ENCODE measurements at regions of chr2 and their contacts with region 1.

Region 1: DNA sequence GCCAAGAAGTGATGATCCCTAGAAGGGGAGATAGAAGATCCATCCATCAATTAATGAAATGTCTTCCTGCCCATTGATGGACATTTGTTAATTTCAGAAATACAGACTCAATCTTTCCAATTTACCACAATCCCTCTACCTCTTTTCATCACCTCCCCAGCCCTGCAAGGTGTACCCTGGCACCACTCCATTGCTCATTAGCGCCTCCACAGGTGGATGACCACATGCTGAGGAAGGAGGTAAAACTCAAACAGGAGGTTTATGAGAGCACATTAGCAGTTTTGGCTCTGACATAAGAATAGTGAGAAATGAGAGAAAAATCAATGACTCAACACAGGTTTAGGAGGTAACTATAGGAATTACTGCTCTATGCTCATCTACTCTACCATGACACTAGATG is 208.0 kb downstream of the C1D start:
- DNase-seq: no peak
- ATAC-seq: no peak
- H3K4me3 ChIP-seq: no peak overlapping the region
- H3K27ac ChIP-seq: no peak overlapping the region
- H3K4me1 ChIP-seq: no peaks in the 10 kb centered on the region
- H3K27me3 ChIP-seq: peaks cover 2% of the 10 kb centered on the region

Region 2: DNA sequence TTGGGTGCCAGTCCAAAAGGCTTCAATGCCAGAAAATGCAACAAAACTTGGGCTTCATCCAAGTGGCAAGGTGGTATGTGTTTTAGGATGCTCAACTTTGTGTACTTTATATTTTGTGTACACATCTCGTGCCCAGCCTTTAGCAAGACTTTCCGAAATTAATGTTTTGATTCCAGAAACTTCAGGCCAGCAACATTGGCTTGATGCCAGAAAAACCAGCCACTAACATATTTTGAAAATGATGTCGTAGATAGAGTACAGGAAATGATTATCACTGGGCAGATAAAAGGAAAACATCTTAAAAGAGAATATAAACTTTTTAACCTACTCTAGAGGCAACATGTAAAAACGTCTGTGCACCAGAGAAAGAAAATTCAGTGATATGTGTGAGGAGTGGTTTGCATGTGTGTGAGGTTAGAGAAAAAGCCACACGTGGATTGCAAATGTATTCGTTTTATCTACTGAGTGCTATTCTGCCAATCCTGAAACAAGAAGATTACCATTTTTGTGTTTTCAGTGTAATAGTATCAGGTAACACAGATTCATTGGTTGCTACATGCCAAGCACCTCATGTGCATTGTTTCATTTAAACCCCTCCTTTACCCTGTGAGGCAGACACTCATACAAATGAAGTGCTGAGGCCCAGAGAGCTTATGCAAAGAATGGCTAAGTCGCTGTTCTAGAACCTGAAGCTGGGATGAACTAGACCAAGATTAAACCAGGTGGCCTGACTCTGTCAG is 56.8 kb before region 1 on chr2:
- intact Hi-C with region 1: no loop called
- DNase-seq: no peak
- ATAC-seq: no peak
- H3K4me3 ChIP-seq: no peak overlapping the region
- H3K27ac ChIP-seq: no peak overlapping the region
- H3K4me1 ChIP-seq: no peaks in the 10 kb centered on the region
- H3K27me3 ChIP-seq: no peaks in the 10 kb centered on the region

Region 3: GRCh38 chr2:68031542-68032160 is 176.9 kb after region 1 on chr2:
- intact Hi-C with region 1: loop called in 1 of 4 experiments (anchors 10 kb)
- DNase-seq: no peak
- ATAC-seq: no peak
- H3K4me3 ChIP-seq: no peak overlapping the region
- H3K27ac ChIP-seq: no peak overlapping the region
- H3K4me1 ChIP-seq: no peaks in the 10 kb centered on the region
- H3K27me3 ChIP-seq: no peaks in the 10 kb centered on the region

Region 4: DNA sequence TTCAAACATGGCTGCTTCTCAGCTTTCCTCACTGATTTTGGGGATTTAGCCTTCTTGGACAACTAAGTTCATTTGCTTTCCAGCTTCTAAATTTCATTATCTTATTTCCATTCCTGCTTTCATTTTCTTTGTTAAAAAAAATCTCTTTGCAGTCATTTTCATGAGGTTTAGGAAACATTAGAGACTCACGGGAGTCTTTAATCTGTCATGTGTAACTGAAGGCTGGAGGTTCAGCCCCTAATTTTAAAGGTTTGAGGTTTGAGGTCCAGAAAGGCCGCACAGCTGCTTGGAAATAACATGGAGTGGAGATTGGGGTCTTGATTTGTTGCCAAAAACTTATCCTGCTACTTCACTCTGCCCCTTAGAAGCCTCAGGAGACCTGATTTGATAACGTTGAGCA is 818.8 kb after region 1 on chr2:
- intact Hi-C with region 1: no loop called
- DNase-seq: no peak
- ATAC-seq: no peak
- H3K4me3 ChIP-seq: no peak overlapping the region
- H3K27ac ChIP-seq: no peak overlapping the region
- H3K4me1 ChIP-seq: no peaks in the 10 kb centered on the region
- H3K27me3 ChIP-seq: no peaks in the 10 kb centered on the region